K562 (cell line): ENCODE measurements at regions of chr17 and their contacts with region 1.

Region 1: DNA sequence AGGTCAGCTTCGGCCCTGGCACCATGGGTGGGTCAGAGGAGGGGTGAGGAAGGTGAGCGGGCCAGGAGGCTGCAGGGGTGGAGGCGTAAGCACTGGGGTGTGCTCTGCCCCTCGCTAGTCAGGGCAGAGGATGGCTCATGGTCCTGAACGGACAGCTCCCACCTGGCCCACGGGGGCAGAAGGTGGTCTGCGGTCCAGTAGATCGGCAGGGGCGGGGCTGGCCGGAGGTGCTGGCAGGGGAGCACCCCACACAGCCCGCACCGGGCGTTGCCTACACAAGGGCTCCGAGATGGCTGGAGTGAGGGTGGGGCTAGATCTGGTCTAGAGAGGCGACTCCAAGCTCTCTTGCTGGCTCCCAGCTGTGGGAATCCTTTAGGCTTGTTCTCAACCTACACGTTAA is 8.2 kb downstream of the NPTX1 start:
- DNase-seq: peak in 2 of 4 experiments; percentile 72 to 76
- ATAC-seq: peak; percentile 25; the same call in 1 of the 3 replicates
- H3K4me3 ChIP-seq: no peak overlapping the region
- H3K27ac ChIP-seq: no peak overlapping the region
- H3K4me1 ChIP-seq: peaks cover 0 to 7% of the 10 kb centered on the region in 2 experiments; a peak in 1 of 5 replicates
- H3K27me3 ChIP-seq: peaks cover 77 to 90% of the 10 kb centered on the region in 2 experiments; a peak in 4 of 5 replicates
- CTCF ChIP-seq: no peak
- EP300 ChIP-seq: no peak
- POLR2A ChIP-seq: no peak
- RAD21 ChIP-seq: no peak

Region 2: DNA sequence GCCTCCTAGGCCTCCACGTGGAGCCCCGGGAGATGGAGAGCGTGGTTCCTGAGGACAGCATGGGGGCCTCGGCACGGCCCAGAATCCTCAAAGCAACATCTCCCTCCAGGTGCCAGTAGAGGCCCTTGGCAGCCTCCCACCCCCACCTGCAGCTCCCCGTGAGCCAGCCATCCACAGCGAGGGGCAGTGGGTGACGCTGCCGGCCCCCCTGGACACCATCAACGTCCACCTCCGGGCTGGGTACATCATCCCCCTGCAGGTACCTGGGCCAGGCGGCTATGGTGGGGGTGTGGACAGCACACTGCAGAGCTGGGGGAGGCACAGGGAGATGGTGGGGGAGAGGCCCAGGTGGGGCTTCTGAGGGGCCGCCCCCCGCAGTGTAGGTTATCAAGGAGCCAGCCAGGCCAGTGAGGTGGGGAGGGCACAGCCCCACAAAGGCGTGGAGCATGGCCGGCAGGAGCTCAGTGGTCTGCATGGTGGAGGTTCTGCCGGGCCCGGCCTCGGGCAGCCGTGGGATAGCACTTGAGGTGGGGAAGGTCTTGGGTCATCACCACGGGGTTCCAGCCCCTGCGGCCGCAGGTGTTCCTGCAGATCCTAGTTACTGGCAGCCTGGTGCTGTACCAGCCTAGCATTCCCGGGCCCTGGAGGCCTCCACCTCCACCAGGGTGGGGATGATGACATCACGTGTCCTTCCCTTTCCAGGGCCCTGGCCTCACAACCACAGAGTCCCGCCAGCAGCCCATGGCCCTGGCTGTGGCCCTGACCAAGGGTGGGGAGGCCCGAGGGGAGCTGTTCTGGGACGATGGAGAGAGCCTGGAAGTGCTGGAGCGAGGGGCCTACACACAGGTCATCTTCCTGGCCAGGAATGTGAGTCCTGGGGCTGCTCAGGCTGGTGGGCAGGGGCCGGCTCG is 350.5 kb before region 1 on chr17:
- CTCF ChIA-PET with region 1: no interaction called
- POLR2A ChIA-PET with region 1: no interaction called
- in situ Hi-C with region 1: no loop called
- intact Hi-C with region 1: no loop called
- DNase-seq: no peak
- ATAC-seq: peak; percentile 13; the same call in 1 of the 3 replicates
- H3K4me3 ChIP-seq: no peak overlapping the region
- H3K27ac ChIP-seq: no peak overlapping the region
- H3K4me1 ChIP-seq: peaks cover 0 to 40% of the 10 kb centered on the region in 2 experiments; a peak in 2 of 5 replicates
- H3K27me3 ChIP-seq: peaks cover 46 to 63% of the 10 kb centered on the region in 2 experiments
- CTCF ChIP-seq: no peak
- EP300 ChIP-seq: no peak
- POLR2A ChIP-seq: no peak
- RAD21 ChIP-seq: no peak

Region 3: GRCh38 chr17:80454557-80455335 is 13.5 kb before region 1 on chr17:
- CTCF ChIA-PET with region 1: no interaction called
- POLR2A ChIA-PET with region 1: interaction called, 10 read pairs
- in situ Hi-C with region 1: no loop called
- intact Hi-C with region 1: no loop called
- DNase-seq: peak; percentile 94 to 97 (median 96)
- ATAC-seq: peak; percentile 96
- H3K4me3 ChIP-seq: peak overlapping the region; percentile 72
- H3K27ac ChIP-seq: peak overlapping the region; percentile 90
- H3K4me1 ChIP-seq: peaks cover 36 to 60% of the 10 kb centered on the region in 2 experiments
- H3K27me3 ChIP-seq: peaks cover 0 to 31% of the 10 kb centered on the region in 2 experiments; a peak in 2 of 5 replicates
- CTCF ChIP-seq: peak in 1 of 3 experiments; percentile 35; a peak in 1 of 6 replicates
- EP300 ChIP-seq: no peak
- POLR2A ChIP-seq: peak; percentile 94
- RAD21 ChIP-seq: no peak